ENCODE measurements at regions of chr10 and their contacts with region 1.

Region 1: GRCh38 chr10:72637398-72637857 is 11.5 kb upstream of the MICU1 start:
- DNase-seq: no peak
- H3K4me3 ChIP-seq: no peak overlapping the region
- H3K27ac ChIP-seq: no peak overlapping the region
- H3K4me1 ChIP-seq: no peaks in the 10 kb centered on the region
- CTCF ChIP-seq: no peak

Region 2: GRCh38 chr10:72162978-72163377 is 474.4 kb before region 1 on chr10:
- CTCF ChIA-PET with region 1: no interaction called
- POLR2A ChIA-PET with region 1: no interaction called
- intact Hi-C with region 1: no loop called
- DNase-seq: no peak
- H3K4me3 ChIP-seq: no peak overlapping the region
- H3K27ac ChIP-seq: no peak overlapping the region
- H3K4me1 ChIP-seq: no peaks in the 10 kb centered on the region
- CTCF ChIP-seq: no peak

Region 3: DNA sequence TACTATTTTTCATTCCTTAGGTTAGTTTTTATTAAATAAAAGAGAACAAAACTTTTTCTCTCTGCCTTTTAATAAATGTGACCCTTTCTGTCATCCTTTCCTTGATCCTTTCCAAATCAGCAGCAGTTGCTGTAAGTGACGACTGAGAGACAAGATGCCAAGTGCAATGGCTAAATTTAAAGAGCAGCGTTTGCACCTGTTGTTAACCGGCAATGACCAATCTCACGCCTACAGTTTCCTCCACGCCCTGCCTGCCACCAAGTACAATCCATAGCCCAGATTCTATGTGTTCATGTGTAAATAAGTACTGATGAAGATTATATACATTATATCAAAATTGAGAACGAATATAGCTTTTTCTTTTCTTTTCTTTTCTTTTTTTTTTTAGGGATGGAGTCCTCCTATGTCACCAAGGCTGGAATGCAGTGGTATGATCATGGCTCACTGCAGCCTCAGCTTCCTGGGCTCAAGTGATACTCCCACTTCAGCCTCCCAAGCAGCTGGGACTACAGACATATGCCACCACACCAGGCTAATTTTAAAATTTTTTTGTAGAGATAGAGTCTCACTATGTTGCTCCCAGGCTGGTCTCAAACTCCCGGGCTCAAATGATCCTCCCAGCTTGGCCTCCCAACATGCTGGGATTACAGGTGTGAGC is 48.0 kb after region 1 on chr10:
- CTCF ChIA-PET with region 1: no interaction called
- POLR2A ChIA-PET with region 1: no interaction called
- intact Hi-C with region 1: loop called (anchors 1 kb)
- DNase-seq: no peak
- H3K4me3 ChIP-seq: no peak overlapping the region
- H3K27ac ChIP-seq: no peak overlapping the region
- H3K4me1 ChIP-seq: no peaks in the 10 kb centered on the region
- CTCF ChIP-seq: no peak